Calu3 (cell line): ENCODE measurements at regions of chr5 and their contacts with region 1.

Region 1: GRCh38 chr5:1179383-1179715 is 22.0 kb upstream of the SLC6A19 start:
- DNase-seq: no peak
- H3K4me3 Mint-ChIP-seq: no peak overlapping the region
- H3K27ac Mint-ChIP-seq: no peak overlapping the region
- H3K4me1 Mint-ChIP-seq: no peaks in the 10 kb centered on the region
- H3K27me3 Mint-ChIP-seq: peaks cover 9% of the 10 kb centered on the region
- CTCF ChIP-seq: no peak

Region 2: GRCh38 chr5:1193591-1193985 is 14.2 kb after region 1 on chr5:
- CTCF ChIA-PET with region 1: no interaction called
- intact Hi-C with region 1: no loop called
- DNase-seq: no peak
- H3K4me3 Mint-ChIP-seq: no peak overlapping the region
- H3K27ac Mint-ChIP-seq: no peak overlapping the region
- H3K4me1 Mint-ChIP-seq: no peaks in the 10 kb centered on the region
- H3K27me3 Mint-ChIP-seq: peaks cover 58% of the 10 kb centered on the region
- CTCF ChIP-seq: no peak

Region 3: GRCh38 chr5:1325870-1326532 is 146.7 kb after region 1 on chr5:
- CTCF ChIA-PET with region 1: interaction called, 11 read pairs
- intact Hi-C with region 1: no loop called
- DNase-seq: no peak
- H3K4me3 Mint-ChIP-seq: no peak overlapping the region
- H3K27ac Mint-ChIP-seq: no peak overlapping the region
- H3K4me1 Mint-ChIP-seq: peaks cover 21% of the 10 kb centered on the region
- H3K27me3 Mint-ChIP-seq: no peaks in the 10 kb centered on the region
- CTCF ChIP-seq: no peak

Region 4: GRCh38 chr5:1385395-1386273 is 206.3 kb after region 1 on chr5:
- CTCF ChIA-PET with region 1: no interaction called
- intact Hi-C with region 1: no loop called
- DNase-seq: peak; percentile 87
- H3K4me3 Mint-ChIP-seq: peak overlapping the region; percentile 75
- H3K27ac Mint-ChIP-seq: no peak overlapping the region
- H3K4me1 Mint-ChIP-seq: no peaks in the 10 kb centered on the region
- H3K27me3 Mint-ChIP-seq: peaks cover 61% of the 10 kb centered on the region
- CTCF ChIP-seq: no peak